ENCODE measurements at regions of chr9 and their contacts with region 1.

Region 1: GRCh38 chr9:121322037-121322775 is 47.8 kb downstream of the STOM start:
- DNase-seq: no peak
- ATAC-seq: no peak
- H3K4me3 Mint-ChIP-seq: no peak overlapping the region
- H3K27ac Mint-ChIP-seq: no peak overlapping the region
- H3K4me1 Mint-ChIP-seq: no peaks in the 10 kb centered on the region
- H3K27me3 Mint-ChIP-seq: no peaks in the 10 kb centered on the region
- CTCF ChIP-seq: no peak

Region 2: GRCh38 chr9:121213136-121213806 is 108.9 kb before region 1 on chr9:
- CTCF ChIA-PET with region 1: interaction called, 32 read pairs
- POLR2A ChIA-PET with region 1: interaction called, 3 read pairs
- intact Hi-C with region 1: loop called (anchors 1 kb)
- DNase-seq: peak; percentile 57
- ATAC-seq: peak; percentile 76
- H3K4me3 Mint-ChIP-seq: no peak overlapping the region
- H3K27ac Mint-ChIP-seq: peak overlapping the region; percentile 59
- H3K4me1 Mint-ChIP-seq: peaks cover 24% of the 10 kb centered on the region
- H3K27me3 Mint-ChIP-seq: no peaks in the 10 kb centered on the region
- CTCF ChIP-seq: peak; percentile 53

Region 3: GRCh38 chr9:121305269-121305994 is 16.8 kb before region 1 on chr9:
- CTCF ChIA-PET with region 1: interaction called, 12 read pairs
- POLR2A ChIA-PET with region 1: no interaction called
- intact Hi-C with region 1: no loop called
- DNase-seq: no peak
- ATAC-seq: no peak
- H3K4me3 Mint-ChIP-seq: no peak overlapping the region
- H3K27ac Mint-ChIP-seq: no peak overlapping the region
- H3K4me1 Mint-ChIP-seq: peaks cover 3% of the 10 kb centered on the region
- H3K27me3 Mint-ChIP-seq: peaks cover 2% of the 10 kb centered on the region
- CTCF ChIP-seq: no peak

Region 4: DNA sequence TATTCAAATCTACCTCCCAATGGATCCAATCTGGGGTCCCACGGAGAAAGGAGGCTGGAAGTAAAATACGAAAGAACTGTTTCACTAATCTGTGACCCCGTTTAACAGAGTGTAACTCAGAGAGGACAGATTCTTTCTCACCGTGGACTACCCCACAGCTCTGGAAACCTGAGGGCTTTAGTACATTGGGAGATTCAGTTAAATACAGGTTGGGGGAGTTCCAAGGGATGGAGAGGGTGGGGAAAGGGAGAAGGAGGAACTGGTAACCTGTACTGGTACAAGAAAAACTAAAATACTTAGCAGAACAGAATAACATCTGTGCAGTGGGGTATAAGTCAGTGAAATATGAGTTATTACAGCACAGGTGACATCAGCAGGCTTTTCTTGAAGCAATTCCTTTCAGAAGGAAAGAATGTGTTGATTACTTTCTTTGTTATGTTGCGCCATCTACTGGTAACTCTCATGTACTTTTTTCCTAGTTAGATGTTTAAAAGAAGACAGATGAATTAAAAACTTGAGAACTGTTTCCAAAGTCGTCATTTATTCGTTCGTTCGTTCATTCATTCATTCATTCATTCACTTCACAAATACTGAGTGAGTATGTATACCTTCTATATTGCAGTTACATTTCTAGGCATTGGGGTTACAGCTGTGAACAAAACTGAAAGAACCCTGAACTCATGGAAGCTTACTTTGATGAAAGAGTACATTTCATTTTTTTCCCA is 77.8 kb after region 1 on chr9:
- CTCF ChIA-PET with region 1: interaction called, 243 read pairs
- POLR2A ChIA-PET with region 1: no interaction called
- intact Hi-C with region 1: loop called (anchors 1 kb)
- DNase-seq: no peak
- ATAC-seq: peak; percentile 42
- H3K4me3 Mint-ChIP-seq: no peak overlapping the region
- H3K27ac Mint-ChIP-seq: no peak overlapping the region
- H3K4me1 Mint-ChIP-seq: no peaks in the 10 kb centered on the region
- H3K27me3 Mint-ChIP-seq: no peaks in the 10 kb centered on the region
- CTCF ChIP-seq: peak; percentile 77

Region 5: DNA sequence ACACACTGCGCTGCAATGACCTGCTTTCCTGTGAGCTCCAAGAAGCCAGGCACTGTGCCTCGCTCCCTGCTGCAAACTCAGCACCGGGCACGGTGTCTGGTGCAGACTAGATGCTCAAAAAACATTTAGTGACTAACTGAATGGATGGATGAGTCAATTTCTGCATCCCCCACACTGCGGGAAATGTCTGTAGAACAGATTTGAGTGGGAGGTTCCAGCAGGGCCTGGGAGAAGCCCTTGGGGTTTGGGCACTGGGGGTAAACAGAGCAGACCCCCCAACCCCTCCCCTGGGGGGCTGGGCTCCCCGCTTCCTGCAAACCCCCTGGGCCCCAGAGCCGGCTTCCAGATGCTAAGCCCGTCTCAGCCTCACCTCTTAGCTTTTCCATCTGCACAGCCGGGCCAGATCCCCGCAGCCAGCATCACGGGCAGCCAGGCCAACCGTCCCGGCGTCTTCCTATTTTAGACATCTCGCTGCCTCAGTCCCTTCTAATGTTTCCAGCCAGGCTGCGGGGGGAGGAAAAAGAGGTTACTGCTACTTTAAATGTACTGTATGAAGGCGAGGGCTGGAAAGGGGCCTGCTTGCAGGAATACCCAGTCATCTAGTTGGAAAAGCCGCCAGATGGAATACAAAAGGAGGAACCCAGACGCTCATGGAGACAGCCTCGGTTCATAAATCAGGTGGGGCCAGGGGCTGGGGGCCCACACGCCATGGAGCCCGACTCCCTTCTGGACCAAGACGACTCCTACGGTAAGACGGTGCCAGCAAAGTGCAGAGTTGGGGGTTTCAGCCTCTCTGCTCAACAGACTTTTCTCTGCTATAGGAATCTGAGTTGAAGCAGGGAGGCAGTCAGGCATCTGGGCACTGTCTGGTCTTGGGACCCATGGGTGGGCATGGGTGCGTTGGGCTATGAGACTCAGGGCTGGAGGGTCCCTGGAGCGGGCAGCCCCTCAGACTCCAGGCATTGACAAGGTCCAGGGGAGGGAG is 244.6 kb after region 1 on chr9:
- CTCF ChIA-PET with region 1: no interaction called
- POLR2A ChIA-PET with region 1: no interaction called
- intact Hi-C with region 1: no loop called
- DNase-seq: no peak
- ATAC-seq: no peak
- H3K4me3 Mint-ChIP-seq: no peak overlapping the region
- H3K27ac Mint-ChIP-seq: no peak overlapping the region
- H3K4me1 Mint-ChIP-seq: no peaks in the 10 kb centered on the region
- H3K27me3 Mint-ChIP-seq: peaks cover 25% of the 10 kb centered on the region
- CTCF ChIP-seq: no peak

Region 6: GRCh38 chr9:121895818-121896544 is 573.8 kb after region 1 on chr9:
- CTCF ChIA-PET with region 1: no interaction called
- POLR2A ChIA-PET with region 1: no interaction called
- intact Hi-C with region 1: no loop called
- DNase-seq: no peak
- ATAC-seq: no peak
- H3K4me3 Mint-ChIP-seq: no peak overlapping the region
- H3K27ac Mint-ChIP-seq: no peak overlapping the region
- H3K4me1 Mint-ChIP-seq: peaks cover 3% of the 10 kb centered on the region
- H3K27me3 Mint-ChIP-seq: no peaks in the 10 kb centered on the region
- CTCF ChIP-seq: no peak